AG04449 (cell line): ENCODE measurements at regions of chr1 and their contacts with region 1.

Region 1: GRCh38 chr1:23496490-23497181 is 12.7 kb upstream of the ASAP3 start:
- DNase-seq: no peak
- H3K4me3 ChIP-seq: no peak overlapping the region
- CTCF ChIP-seq: no peak

Region 2: GRCh38 chr1:23224714-23225648 is 271.7 kb before region 1 on chr1:
- CTCF ChIA-PET with region 1: no interaction called
- POLR2A ChIA-PET with region 1: no interaction called
- DNase-seq: peak; percentile 29
- H3K4me3 ChIP-seq: 0 out of 2 replicates have a peak overlapping the region, but pooled peaks have one; percentile 20
- CTCF ChIP-seq: no peak

Region 3: DNA sequence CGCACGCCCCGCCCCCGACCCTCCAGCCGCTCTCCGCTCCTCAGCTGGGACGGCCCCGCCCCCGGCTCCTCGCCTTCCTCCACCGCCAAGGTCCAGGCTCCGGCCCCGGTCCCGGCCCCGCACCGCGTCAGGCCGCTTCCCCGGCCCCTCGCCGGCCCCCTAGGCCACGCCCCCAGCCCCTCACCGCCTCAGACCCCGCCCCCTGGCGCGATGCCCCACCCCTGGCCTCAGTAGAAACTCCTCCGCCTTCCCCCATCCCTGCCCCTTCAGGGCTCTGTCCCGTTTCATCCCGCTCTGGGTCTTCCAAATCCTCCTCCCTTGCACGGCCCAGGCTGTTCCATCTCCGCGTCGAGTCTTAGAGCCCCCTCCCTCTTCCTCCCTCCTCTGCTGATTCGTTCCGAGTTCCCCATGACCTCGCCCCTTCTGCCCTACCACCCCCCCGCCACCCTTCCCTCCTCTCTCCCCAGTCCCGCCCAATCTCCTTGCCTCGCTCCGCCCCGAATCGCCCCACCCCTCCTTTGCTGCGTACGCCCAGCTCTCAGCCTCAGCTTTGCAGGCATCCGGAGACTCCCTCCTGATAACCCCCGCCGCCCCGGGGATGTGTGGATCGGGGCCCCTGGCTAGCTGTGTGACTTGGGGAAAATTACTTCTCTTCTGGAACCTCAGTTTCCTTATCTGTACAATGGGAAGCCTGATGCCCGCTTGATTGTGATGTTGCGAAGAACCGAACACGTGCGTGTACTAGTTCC is 12.2 kb before region 1 on chr1:
- CTCF ChIA-PET with region 1: interaction called, 130 read pairs
- POLR2A ChIA-PET with region 1: interaction called, 4 read pairs
- DNase-seq: no peak
- H3K4me3 ChIP-seq: peak overlapping the region; percentile 77
- CTCF ChIP-seq: no peak

Region 4: DNA sequence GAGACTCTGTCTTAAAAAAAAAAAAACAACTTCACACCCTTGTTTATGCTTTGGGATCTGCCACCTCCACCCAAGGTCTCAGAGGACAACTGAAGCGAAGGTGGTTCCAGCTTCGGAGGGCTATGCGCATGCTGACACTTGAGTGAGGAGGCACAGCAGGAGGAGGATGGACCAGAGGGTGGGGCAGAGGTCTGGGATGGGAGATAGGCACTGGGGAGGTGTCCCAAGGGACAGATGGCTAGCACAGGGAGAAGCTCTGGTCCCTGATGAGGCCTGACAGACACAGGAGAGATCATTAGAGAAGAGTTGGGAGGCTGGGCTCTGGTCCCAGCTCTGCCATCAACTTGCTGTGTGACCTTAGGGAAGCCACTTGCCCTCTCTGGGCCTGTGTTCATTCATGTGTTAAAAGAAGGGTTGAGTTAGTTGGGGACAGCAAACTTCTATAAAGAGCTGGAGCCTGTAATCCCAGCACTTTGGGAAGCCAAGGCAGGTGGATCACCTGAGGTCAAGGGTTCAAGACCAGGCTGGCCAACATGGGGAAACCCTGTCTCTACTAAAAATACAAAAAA is 17.6 kb after region 1 on chr1:
- CTCF ChIA-PET with region 1: interaction called, 161 read pairs
- POLR2A ChIA-PET with region 1: no interaction called
- DNase-seq: no peak
- H3K4me3 ChIP-seq: no peak overlapping the region
- CTCF ChIP-seq: no peak

Region 5: DNA sequence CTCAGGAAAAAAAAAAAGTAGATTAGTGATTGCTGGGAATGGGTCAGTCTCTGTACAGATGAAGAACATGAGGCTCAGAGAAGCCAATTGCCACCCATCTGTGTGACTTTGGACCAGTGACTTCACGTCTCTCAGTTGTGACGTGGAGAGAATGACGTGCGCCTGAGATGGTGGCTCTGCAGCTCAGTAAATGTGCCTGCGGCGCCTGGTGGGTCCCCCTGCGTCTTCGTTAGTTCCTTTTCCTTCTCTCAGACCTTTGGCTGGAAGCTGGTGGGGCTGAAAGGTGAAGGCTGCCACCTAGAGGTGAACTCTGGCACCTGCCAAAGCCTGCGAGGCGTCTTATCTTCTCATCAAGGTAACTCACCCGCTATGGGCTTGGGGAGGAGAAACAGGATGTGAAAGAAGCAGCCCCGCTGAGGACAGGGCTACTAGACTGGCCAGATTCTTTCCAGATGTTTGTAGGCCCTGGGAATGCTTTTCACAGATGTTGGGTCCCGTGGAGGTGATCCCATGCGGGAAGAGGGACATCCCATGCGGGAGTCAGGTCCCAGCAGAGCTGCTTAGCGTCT is 43.1 kb after region 1 on chr1:
- CTCF ChIA-PET with region 1: interaction called, 313 read pairs
- POLR2A ChIA-PET with region 1: interaction called, 4 read pairs
- DNase-seq: no peak
- H3K4me3 ChIP-seq: peak overlapping the region; percentile 33
- CTCF ChIP-seq: peak; percentile 93

Region 6: GRCh38 chr1:23657659-23658275 is 161.1 kb after region 1 on chr1:
- CTCF ChIA-PET with region 1: interaction called, 76 read pairs
- POLR2A ChIA-PET with region 1: no interaction called
- DNase-seq: no peak
- H3K4me3 ChIP-seq: no peak overlapping the region
- CTCF ChIP-seq: peak; percentile 90